ENCODE measurements at regions of chr10 and their contacts with region 1.

Region 1: DNA sequence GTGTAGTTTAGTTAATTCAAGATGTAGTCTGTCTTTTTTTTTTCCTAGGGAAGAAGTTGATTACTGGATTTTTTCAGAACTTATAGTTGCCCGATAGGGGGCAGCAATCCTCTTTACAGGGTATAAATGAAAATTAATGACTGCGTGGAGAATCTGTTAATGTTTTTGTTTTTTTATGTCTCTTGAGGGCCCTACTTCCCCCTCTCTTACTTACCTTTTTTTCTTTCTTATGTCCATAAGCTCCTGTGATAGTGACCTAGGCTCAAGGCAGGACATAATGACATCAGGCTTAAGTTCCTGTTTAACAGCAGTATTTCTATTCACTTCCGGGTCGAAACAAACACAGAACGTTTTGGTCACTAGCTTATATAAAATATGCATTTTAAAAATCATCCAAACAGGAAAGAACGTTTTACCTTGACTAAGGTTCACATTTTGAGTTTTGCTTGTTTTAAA is 18.8 kb downstream of the CDC123 start:
- DNase-seq: peak in 22 of 35 experiments; percentile 7 to 77 (median 32)
- ATAC-seq: peak in 2 of 4 experiments; percentile 11 to 40
- H3K4me3 ChIP-seq: peak overlapping the region in 1 of 2 donors; percentile 1
- H3K4me3 Mint-ChIP-seq: peak overlapping the region; percentile 33 to 67 (median 45)
- H3K27ac ChIP-seq: no peak overlapping the region
- H3K27ac Mint-ChIP-seq: peak overlapping the region; percentile 80 to 86
- H3K4me1 ChIP-seq: no peaks in the 10 kb centered on the region
- H3K4me1 Mint-ChIP-seq: peaks cover 14 to 24% (median 20%) of the 10 kb centered on the region in 3 donors
- H3K27me3 ChIP-seq: no peaks in the 10 kb centered on the region
- H3K27me3 Mint-ChIP-seq: no peaks in the 10 kb centered on the region

Region 2: DNA sequence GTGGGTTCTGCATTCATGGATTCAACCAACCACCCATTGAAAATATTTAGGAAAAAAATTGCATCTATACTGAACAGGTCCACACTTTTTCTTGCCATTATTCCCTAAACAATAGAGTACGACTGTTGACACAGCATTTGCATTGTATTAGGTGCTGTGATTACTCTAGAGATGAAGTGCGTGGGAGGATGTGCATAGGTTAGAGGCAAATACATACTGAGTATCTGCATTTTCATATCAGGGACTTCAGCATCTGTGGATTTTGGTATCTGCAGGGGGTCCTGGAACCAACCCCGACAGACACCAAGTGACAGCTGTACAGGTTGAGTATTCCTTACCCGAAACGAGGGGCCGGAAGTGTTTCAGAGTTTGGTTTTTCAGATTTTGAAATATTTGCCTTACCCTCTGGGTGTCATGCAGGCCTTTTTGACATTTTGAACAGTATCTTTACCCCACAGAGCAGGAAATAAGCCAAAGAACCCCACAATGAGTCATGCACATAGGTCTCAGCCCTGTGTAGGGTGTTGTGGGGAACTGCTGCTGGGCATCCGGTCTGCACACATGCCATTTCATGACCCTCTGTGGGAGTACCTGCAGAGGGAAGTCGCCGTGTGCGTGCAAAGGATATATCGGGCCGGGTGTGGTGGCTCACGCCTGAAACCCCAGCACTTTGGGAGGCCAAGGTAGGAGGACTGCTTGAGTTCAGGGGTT is 33.6 kb before region 1 on chr10:
- CTCF ChIA-PET with region 1: interaction called in 1 of 2 experiments, 3 read pairs
- POLR2A ChIA-PET with region 1: interaction called in 1 of 2 experiments, 11 read pairs
- DNase-seq: peak; percentile 39 to 82 (median 60)
- ATAC-seq: peak; percentile 99 to 100 (median 100)
- H3K4me3 ChIP-seq: no peak overlapping the region
- H3K4me3 Mint-ChIP-seq: peak overlapping the region in 2 of 3 donors; percentile 28 to 60
- H3K27ac ChIP-seq: peak overlapping the region; percentile 79
- H3K27ac Mint-ChIP-seq: peak overlapping the region; percentile 90 to 92
- H3K4me1 ChIP-seq: peaks cover 0 to 18% of the 10 kb centered on the region in 2 experiments
- H3K4me1 Mint-ChIP-seq: peaks cover 7 to 38% (median 28%) of the 10 kb centered on the region in 3 donors
- H3K27me3 ChIP-seq: no peaks in the 10 kb centered on the region
- H3K27me3 Mint-ChIP-seq: no peaks in the 10 kb centered on the region

Region 3: DNA sequence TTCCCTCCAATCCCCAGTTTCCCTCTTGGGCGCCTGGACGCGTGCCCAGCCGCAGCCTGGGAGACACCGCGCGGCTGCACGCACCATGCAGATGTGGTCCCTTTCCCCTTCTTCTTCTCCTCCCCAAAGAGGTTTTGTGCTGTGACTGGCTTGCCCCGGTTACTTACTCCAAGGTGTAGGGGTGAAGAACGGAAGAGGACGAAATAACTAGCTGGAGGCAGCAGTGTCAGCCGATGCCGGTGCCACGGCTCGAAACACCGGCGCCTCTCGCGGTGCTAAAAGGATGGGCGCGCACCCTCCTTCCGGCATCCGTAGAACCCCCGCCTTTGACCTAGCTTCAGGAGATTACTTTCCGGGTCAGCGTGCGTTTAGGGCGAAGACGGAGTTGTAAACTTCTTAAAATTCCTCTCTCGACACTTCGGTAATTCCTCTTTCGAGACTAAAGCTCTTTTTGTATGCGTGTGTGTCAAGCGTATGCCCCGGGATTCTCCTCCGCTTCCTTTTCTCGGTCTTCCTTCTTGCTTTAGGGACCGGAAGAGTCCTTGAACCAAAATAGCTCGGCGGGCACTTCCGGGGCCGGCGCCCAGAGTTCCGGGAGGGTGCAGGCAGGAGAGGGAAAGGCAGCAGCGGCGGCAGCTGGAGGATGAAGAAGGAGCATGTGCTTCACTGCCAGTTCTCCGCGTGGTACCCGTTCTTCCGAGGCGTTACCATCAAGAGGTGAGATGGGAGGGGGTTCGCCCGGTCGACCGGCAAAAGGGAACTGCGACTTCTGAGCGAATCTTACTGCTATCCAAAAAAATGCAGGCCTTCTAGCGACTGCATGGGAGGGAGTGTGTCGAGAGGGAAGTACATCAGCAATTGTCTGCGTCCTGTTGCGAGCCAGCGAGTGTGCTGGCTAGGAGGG is 18.9 kb before region 1 on chr10 and contains the starts of genes CDC123 and NUDT5:
- CTCF ChIA-PET with region 1: interaction called, 12 to 28 read pairs
- POLR2A ChIA-PET with region 1: interaction called in 1 of 2 experiments, 3 read pairs
- DNase-seq: peak; percentile 70 to 91 (median 81)
- ATAC-seq: peak; percentile 92 to 95 (median 94)
- H3K4me3 ChIP-seq: peak within 1 kb of the TSS; percentile 78 to 91
- H3K4me3 Mint-ChIP-seq: peak within 1 kb of the TSS; percentile 95 to 100 (median 96)
- H3K27ac ChIP-seq: peak within 1 kb of the TSS; percentile 90
- H3K27ac Mint-ChIP-seq: peak within 1 kb of the TSS; percentile 99 to 100
- H3K4me1 ChIP-seq: peaks cover 16 to 19% of the 10 kb centered on the region in 2 experiments
- H3K4me1 Mint-ChIP-seq: peaks cover 42 to 72% (median 57%) of the 10 kb centered on the region in 3 donors
- H3K27me3 ChIP-seq: no peaks in the 10 kb centered on the region
- H3K27me3 Mint-ChIP-seq: no peaks in the 10 kb centered on the region
- total RNA-seq, gene CDC123: 35.5 to 48.6 (median 43.7) TPM
- total RNA-seq, gene NUDT5: 32.1 to 54.0 (median 50.3) TPM

Region 4: DNA sequence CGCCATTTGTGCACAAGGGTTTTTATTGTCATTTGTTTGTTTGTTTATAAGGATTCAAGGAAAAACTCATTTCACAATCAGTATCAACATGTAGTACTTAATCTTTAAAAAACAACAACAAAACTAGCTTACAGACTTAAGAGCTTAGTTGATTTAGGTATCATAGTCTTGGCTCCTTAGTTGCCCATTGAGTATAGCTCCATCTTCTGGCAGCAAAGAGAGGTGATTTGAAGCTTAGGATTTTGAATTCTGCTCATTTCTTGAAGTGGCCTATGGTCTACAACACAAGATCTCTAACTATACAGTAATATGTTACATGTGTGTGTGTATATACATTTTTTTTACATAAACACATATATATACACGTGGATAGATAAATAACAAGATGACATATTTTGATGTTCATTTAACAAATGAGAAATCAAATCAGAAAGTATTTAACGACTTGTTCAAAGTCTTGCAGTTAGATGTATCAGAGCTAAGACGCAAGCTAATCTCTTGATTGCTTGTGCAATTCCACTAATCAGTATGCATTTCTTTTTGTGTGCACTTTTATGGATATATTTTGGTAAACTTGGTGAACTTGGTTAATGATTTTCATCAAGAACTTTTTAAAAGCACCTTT is 441.8 kb after region 1 on chr10:
- CTCF ChIA-PET with region 1: interaction called, 17 to 65 read pairs
- POLR2A ChIA-PET with region 1: no interaction called
- DNase-seq: peak in 3 of 35 experiments; percentile 10 to 67 (median 12)
- ATAC-seq: peak; percentile 57 to 68 (median 62)
- H3K4me3 ChIP-seq: no peak overlapping the region
- H3K4me3 Mint-ChIP-seq: no peak overlapping the region
- H3K27ac ChIP-seq: no peak overlapping the region
- H3K27ac Mint-ChIP-seq: no peak overlapping the region
- H3K4me1 ChIP-seq: peaks cover 0 to 5% of the 10 kb centered on the region in 2 experiments
- H3K4me1 Mint-ChIP-seq: peaks cover 6 to 7% (median 7%) of the 10 kb centered on the region in 3 donors
- H3K27me3 ChIP-seq: no peaks in the 10 kb centered on the region
- H3K27me3 Mint-ChIP-seq: no peaks in the 10 kb centered on the region

Region 5: GRCh38 chr10:12710594-12711349 is 496.0 kb after region 1 on chr10:
- CTCF ChIA-PET with region 1: interaction called, 5 to 13 read pairs
- POLR2A ChIA-PET with region 1: no interaction called
- DNase-seq: peak; percentile 48 to 83 (median 67)
- ATAC-seq: peak; percentile 77 to 84 (median 78)
- H3K4me3 ChIP-seq: no peak overlapping the region
- H3K4me3 Mint-ChIP-seq: no peak overlapping the region
- H3K27ac ChIP-seq: no peak overlapping the region
- H3K27ac Mint-ChIP-seq: peak overlapping the region in 1 of 2 donors; percentile 61
- H3K4me1 ChIP-seq: peaks cover 0 to 2% of the 10 kb centered on the region in 2 experiments
- H3K4me1 Mint-ChIP-seq: peaks cover 6 to 9% (median 9%) of the 10 kb centered on the region in 3 donors
- H3K27me3 ChIP-seq: no peaks in the 10 kb centered on the region
- H3K27me3 Mint-ChIP-seq: no peaks in the 10 kb centered on the region

Region 6: DNA sequence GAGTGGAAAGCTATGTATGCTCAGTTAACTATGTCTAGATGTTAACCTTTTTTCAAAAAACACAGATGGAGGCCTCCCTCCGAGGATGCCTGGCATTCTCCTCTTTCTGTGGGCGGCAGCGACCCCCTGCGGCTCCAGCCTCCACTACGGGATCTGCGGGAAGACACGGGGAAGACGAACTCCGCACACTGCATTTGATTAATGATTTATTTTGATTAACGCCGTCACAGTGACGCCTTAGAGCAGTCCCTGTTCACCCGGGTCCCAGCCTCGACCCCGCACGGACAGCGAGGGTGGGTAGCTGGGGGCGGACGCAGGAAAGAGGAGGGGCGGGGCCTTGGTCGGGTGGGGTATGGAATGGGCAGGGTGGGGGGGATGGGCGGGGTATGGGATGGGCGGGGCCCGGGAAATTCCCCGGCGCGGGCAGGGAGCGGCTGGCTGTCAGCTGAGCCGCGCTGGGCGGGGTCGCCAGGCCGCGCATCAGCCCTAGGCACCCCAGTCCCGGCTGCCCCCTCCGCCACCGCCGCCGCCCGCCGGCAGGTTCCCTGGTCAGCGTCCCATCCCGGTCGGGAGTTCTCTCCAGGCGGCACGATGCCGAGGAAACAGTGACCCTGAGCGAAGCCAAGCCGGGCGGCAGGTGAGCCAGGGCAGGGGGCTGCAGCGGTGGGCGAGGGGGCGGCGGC is 885.0 kb after region 1 on chr10 and contains the start of gene OPTN:
- CTCF ChIA-PET with region 1: interaction called in 1 of 2 experiments, 11 read pairs
- POLR2A ChIA-PET with region 1: no interaction called
- DNase-seq: peak; percentile 62 to 90 (median 77)
- ATAC-seq: peak; percentile 74 to 82 (median 75)
- H3K4me3 ChIP-seq: peak within 1 kb of the TSS; percentile 74 to 77
- H3K4me3 Mint-ChIP-seq: peak within 1 kb of the TSS; percentile 72 to 95 (median 87)
- H3K27ac ChIP-seq: peak within 1 kb of the TSS; percentile 85
- H3K27ac Mint-ChIP-seq: peak within 1 kb of the TSS; percentile 93 to 97
- H3K4me1 ChIP-seq: peaks cover 6 to 37% of the 10 kb centered on the region in 2 experiments
- H3K4me1 Mint-ChIP-seq: peaks cover 41 to 51% (median 43%) of the 10 kb centered on the region in 3 donors
- H3K27me3 ChIP-seq: no peaks in the 10 kb centered on the region
- H3K27me3 Mint-ChIP-seq: no peaks in the 10 kb centered on the region
- total RNA-seq, gene OPTN: 87.7 to 115 (median 94.9) TPM